KBM-7 (cell line): ENCODE measurements at regions of chr11 and their contacts with region 1.

Region 1: DNA sequence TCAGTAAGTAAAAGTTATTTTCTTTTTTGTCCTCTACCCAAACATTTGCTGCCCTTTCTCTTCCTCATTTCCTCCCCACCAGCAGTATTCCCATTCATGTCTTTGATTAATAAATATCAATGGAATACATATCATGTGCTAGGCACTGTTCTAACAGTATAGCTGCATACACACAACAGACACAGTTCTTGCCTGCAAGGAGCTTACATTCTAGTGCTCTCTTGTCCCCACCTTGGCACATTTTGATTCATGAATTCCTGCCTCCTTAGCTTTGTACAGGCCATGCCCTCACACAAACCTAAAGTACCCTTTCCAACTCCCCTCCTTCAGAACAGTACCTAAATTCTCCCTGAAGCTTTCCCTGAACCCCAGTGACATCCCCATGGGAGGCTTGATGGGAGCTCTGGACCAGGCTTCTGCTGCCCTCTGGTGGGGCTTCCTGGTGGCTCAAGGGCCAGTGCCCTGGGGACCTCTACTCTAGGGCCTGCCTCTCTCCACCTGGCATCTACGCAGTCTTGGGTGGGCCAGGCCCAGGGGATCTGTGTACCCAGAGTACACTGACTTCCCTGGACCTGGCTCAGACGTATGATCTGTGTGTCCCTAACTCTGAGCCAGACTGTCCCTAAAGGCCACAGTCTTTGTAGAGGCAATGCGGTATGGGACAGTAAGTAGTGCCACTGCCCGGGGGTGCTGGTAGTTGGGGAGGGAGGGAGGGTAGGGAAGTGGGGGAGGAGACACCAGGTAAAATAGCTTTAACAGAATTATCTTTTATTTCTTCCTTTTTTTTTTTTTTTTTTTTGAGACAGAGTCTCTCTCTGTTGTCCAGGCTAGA is 14.1 kb downstream of the RPS13 start:
- DNase-seq: peak; percentile 73

Region 2: GRCh38 chr11:16820324-16821092 is 242.9 kb before region 1 on chr11:
- in situ Hi-C with region 1: loop called (anchors 25 kb)
- DNase-seq: peak; percentile 67

Region 3: GRCh38 chr11:16945671-16946469 is 117.5 kb before region 1 on chr11:
- in situ Hi-C with region 1: loop called (anchors 10 kb)
- DNase-seq: peak; percentile 62

Region 4: DNA sequence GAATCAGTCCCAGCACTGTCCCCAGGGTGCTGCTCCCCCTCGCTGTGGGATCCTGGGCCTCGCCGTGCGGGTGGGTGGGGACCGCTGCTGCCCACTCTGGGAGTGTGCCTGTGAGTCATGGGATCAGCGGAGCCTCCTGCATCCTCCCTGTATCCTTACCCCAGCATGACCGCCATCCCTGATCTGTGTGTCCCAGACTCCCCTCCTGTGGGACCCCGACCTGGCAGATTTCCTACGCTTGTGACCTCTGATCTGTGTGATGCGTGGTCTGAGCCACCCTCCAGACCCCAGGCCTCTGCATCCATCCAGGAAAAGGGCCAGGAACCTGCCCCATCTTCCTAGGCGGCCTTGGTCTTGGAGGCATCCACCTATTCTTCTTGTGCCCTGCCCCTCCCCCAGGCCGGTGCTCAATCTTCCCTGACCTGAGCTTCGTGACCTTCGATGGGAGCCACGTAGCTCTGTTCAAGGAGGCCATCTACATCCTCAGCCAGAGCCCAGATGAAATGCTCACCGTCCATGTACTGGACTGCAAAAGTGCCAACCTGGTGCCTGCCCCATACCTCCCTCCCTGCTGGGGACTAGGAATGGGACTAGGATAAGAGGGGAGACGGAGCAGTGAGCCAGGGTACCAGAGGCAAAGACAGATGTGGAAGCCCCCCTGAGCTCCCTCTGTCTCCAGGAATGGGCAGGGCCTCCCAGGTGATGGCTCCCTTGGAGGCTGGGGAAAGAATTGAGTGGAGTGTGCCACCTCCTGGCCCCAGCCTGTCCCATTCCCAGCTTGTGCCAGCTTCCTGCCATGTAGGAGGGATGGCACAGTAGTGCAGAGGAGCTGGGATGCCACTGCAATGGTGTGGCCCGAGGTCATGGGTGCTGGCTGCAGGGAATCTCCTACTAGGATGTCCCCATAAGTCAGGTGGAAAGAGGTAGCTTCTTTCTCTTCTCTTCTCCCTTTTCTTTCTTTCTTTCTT is 549.1 kb after region 1 on chr11:
- in situ Hi-C with region 1: no loop called
- DNase-seq: no peak